ENCODE measurements at regions of chr20 and their contacts with region 1.

Region 1: DNA sequence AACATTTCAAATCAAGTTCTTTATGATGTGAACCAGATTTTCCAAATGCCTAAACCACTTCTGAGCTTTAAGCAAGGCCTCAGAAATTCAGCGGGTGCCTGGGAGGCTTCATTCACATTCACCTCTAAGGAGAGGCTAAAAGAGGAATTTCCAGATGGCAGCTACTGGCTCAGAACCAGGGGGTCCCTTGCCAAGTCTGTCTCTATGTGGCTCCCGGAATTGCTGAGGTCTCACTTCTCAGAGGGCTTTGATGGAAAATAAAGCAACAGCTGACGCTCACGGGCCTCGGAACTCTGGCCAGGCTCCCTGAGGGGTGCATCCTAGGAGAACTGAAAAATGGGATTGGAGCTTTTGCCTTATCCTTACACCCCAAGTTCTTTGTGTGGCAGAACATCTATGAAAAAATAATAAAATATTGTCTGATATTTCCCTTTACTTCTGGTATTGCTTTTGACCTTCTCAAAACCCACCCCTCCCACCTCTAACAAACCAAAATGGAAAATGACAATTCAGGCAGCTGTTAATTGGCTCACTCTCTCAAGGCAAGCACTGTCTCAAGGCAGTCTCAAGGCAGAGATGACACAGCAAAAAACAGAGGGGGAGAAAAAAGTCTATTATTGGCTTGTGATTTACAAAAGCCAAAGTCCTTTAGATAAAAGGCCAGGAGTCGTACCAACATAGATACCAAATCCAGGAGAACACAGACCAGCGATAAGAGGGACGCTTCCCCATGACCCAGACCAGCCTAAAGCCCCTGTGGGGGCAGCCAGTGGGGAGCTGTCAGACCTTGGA is 21.8 kb upstream of the LRRN4 start:
- DNase-seq: no peak
- ATAC-seq: no peak
- H3K4me3 ChIP-seq: no peak overlapping the region
- H3K27ac ChIP-seq: no peak overlapping the region
- H3K4me1 ChIP-seq: peaks cover 6% of the 10 kb centered on the region
- H3K27me3 ChIP-seq: no peaks in the 10 kb centered on the region
- CTCF ChIP-seq: no peak

Region 2: DNA sequence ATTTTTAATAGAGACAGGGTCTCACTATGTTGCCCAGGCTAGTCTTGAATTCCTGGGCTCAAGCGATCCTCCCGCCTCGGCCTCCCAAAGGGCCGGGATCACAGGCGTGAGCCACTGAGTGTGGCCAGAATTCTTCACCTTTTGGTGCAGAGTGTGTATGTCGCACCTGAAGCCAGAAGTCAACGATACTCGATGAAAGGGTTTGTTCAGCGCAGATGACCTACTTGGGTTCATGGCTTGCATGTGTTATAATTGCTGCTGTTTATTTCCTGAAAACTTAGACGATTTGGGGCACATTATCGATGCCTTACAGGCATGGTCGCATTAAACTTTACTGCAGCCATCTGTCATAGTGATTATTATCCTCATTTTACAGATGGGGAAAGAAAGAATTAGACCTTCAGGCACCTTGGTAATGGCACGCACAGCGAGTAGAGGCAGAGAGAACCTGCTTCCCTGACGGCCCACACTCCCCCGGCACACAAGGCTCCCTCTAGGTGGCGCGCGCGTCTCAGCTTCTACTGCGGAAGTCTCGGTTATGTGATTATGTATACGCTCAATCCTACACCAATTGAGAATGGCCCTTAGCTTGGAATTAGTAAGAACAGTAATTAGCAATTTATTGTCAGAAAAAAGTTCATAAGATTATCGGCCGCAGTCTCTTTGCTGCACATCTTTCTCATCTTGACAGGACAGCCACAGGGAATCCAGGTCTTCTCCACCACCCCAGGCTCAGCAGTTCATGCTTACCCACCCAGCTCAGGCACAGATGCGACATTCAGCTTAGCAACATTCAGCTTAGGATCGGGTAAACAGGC is 546.1 kb before region 1 on chr20:
- intact Hi-C with region 1: loop called (anchors 5 kb)
- DNase-seq: peak; percentile 91
- ATAC-seq: peak; percentile 91 to 94
- H3K4me3 ChIP-seq: no peak overlapping the region
- H3K27ac ChIP-seq: no peak overlapping the region
- H3K4me1 ChIP-seq: peaks cover 27% of the 10 kb centered on the region
- H3K27me3 ChIP-seq: no peaks in the 10 kb centered on the region
- CTCF ChIP-seq: peak; percentile 81

Region 3: GRCh38 chr20:7031222-7031621 is 955.6 kb after region 1 on chr20:
- intact Hi-C with region 1: no loop called
- DNase-seq: no peak
- ATAC-seq: no peak
- H3K4me3 ChIP-seq: no peak overlapping the region
- H3K27ac ChIP-seq: no peak overlapping the region
- H3K4me1 ChIP-seq: no peaks in the 10 kb centered on the region
- H3K27me3 ChIP-seq: no peaks in the 10 kb centered on the region
- CTCF ChIP-seq: peak; percentile 14

Measured in lower lobe of right lung (tissue), 2 donors.